ENCODE measurements at regions of chr11 and their contacts with region 1.

Region 1: DNA sequence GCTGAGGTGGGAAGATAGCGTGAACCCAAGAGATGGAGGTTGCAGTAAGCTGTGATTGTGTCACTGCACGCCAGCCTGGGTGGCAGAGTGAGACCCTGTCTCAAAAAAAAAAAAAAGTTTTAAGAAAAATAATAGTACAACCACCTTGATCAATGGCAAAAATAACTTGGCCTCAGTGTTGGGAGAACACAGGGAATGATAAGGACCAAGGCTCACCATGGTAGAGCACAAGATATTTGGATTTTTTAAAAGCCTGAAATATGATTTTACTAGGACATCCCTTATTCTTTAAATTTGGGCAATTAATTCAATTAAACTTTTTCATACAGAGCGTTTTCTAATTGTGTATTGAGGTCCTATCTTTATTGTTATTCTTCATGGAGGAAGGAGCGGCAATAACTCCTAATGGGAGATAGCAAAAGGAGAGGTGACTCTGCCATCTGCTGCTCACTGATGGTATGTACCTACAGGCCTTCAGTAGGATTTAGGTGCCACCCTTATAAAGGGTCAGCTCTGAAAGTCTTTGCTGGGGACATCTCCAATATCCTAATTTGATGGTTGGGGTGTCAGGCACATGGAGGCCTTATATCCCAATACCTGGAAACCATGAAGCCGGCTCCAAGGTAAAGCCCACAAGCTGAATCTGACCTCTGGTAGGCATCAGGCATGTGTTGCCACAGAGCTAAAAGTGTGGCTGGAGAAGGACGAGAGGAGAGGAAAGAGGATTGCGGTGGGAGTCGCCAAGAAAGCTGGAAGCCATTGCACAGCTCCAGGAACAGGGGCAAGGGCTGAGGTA is 21.9 kb upstream of the POLD3 start:
- DNase-seq: no peak
- H3K4me3 ChIP-seq: no peak overlapping the region
- H3K27ac ChIP-seq: no peak overlapping the region
- H3K4me1 ChIP-seq: no peaks in the 10 kb centered on the region
- H3K27me3 ChIP-seq: no peaks in the 10 kb centered on the region
- CTCF ChIP-seq: peak; percentile 61 to 72 (median 71)
- POLR2A ChIP-seq: no peak

Region 2: GRCh38 chr11:74255741-74256369 is 314.6 kb before region 1 on chr11:
- intact Hi-C with region 1: loop called (anchors 10 kb)
- DNase-seq: no peak
- H3K4me3 ChIP-seq: no peak overlapping the region
- H3K27ac ChIP-seq: no peak overlapping the region
- H3K4me1 ChIP-seq: peaks cover 15% of the 10 kb centered on the region
- H3K27me3 ChIP-seq: no peaks in the 10 kb centered on the region
- CTCF ChIP-seq: peak; percentile 67 to 92 (median 76)
- POLR2A ChIP-seq: no peak

Region 3: GRCh38 chr11:74650498-74650897 is 80.0 kb after region 1 on chr11:
- intact Hi-C with region 1: no loop called
- DNase-seq: no peak
- H3K4me3 ChIP-seq: no peak overlapping the region
- H3K27ac ChIP-seq: no peak overlapping the region
- H3K4me1 ChIP-seq: peaks cover 9% of the 10 kb centered on the region
- H3K27me3 ChIP-seq: no peaks in the 10 kb centered on the region
- CTCF ChIP-seq: no peak
- POLR2A ChIP-seq: no peak

Measured in vagina (tissue), 2 donors.